ENCODE measurements at regions of chr7 and their contacts with region 1.

Region 1: DNA sequence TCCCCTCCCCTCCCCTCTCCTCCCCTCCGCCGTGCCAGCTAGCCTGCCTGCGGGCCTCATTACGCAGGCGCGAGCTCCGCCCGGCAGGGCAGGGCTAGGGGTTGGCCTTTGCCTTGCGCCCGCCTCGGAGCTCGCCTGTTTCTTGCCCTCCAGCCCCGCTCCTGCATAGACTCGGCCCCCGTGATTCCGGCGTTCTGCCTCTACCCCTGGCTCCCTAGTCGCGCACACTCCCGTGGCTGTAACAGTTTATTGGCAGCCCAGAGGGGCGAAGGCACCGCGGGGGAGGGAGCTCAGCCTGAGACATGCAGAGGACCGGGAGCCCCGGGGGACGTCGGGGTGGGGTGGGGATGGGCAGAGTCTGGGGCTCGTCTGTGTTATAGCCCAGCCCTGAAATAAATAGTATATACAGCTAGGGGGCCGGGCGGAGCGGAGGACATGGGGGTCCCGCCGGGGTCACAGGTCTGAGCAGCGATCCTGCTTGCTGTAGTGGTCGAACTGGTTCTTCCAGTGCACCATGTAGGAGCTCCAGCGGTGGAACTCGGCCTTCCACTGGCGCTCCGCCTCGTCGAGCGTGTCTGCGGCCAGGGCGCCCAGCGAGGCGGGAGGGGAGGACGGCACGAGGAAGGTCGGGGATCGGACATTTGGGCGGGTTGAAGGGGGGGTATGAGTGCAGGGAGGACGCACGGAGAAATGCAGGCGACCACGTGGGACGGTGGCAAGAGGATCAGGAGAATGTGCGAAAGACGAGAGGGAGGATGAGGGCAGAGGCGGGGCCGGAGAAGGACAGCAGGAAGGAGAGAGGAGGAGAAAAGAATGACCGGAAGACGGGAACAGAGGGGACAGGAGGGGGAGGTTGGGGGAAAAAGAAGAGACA is 483 bp upstream of the UFSP1 start:
- DNase-seq: peak; percentile 93 to 95 (median 94)
- H3K4me3 ChIP-seq: peak overlapping the region; percentile 15 to 65 (median 32)
- H3K27ac ChIP-seq: peak overlapping the region; percentile 74 to 94 (median 81)
- H3K4me1 ChIP-seq: peaks cover 17 to 42% of the 10 kb centered on the region in 2 donors
- H3K27me3 ChIP-seq: peaks cover 2% of the 10 kb centered on the region
- CTCF ChIP-seq: peak in 1 of 6 experiments; percentile 12
- POLR2A ChIP-seq: peak in 1 of 2 donors; percentile 83

Region 2: GRCh38 chr7:101035941-101036340 is 145.9 kb after region 1 on chr7:
- intact Hi-C with region 1: no loop called
- DNase-seq: no peak
- H3K4me3 ChIP-seq: no peak overlapping the region
- H3K27ac ChIP-seq: no peak overlapping the region
- H3K4me1 ChIP-seq: no peaks in the 10 kb centered on the region
- H3K27me3 ChIP-seq: peaks cover 7% of the 10 kb centered on the region
- CTCF ChIP-seq: no peak
- POLR2A ChIP-seq: no peak

Region 3: GRCh38 chr7:101058355-101058754 is 168.4 kb after region 1 on chr7:
- intact Hi-C with region 1: loop called (anchors 5 kb)
- DNase-seq: peak; percentile 45 to 74 (median 67)
- H3K4me3 ChIP-seq: no peak overlapping the region
- H3K27ac ChIP-seq: no peak overlapping the region
- H3K4me1 ChIP-seq: no peaks in the 10 kb centered on the region
- H3K27me3 ChIP-seq: peaks cover 18% of the 10 kb centered on the region
- CTCF ChIP-seq: no peak
- POLR2A ChIP-seq: no peak

Region 4: DNA sequence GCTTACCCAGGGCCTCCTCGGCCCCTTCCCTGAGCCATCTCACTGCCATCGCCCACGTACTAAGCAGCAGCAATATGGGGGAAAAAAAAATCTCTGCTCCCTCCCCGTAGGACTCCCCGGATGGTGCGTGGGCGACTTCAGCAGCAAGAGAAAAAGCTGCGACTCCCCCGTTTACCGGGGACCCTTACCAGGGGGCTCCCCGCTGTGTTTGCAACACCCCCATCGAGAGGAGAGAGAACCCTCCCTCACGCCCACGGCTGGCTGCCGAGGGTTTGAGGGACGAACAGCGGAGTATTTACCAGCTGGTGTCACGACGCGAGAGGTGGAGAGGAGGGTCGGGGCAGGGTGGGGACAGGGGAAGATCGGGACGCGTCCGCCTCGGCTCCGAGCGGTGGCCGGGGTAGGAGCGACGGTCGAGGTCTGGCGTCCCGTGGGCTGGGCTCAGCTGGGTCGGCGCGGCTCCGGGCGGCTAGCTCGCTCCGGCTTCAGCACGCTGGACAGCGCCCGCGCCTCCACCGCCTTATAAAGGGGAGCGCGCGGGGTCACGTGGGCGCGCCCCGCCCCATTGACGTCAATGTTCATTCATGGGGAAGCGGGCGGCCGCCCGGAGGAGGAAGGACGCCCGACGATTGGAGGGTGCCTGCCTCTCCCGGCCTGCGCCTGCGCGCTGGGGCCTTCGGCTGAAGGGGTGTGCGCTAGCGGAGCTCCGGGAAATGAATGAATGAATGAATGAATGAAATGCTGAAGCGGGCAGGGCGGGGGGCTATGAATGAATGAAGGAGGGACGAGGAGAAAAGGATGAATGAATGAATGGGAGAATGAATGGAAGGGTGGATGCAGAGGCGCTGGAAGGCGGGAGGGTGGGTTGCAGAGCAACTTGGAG is 275.3 kb after region 1 on chr7 and contains the start of gene VGF:
- intact Hi-C with region 1: loop called in 1 of 2 experiments (anchors 10 kb)
- DNase-seq: peak; percentile 91 to 96 (median 92)
- H3K4me3 ChIP-seq: peak within 1 kb of the TSS in 1 of 4 donors; percentile 8
- H3K27ac ChIP-seq: no peak within 1 kb of the TSS
- H3K4me1 ChIP-seq: peaks cover 12 to 34% of the 10 kb centered on the region in 2 donors
- H3K27me3 ChIP-seq: peaks cover 34% of the 10 kb centered on the region
- CTCF ChIP-seq: no peak
- POLR2A ChIP-seq: peak in 1 of 2 donors; percentile 16
- total RNA-seq, gene VGF: 0.97 to 14.3 (median 3.3) TPM in 6 of 9 donors, not detected in the others

Region 5: GRCh38 chr7:101287032-101287431 is 397.0 kb after region 1 on chr7:
- intact Hi-C with region 1: loop called in 1 of 2 experiments (anchors 10 kb)
- DNase-seq: no peak
- H3K4me3 ChIP-seq: no peak overlapping the region
- H3K27ac ChIP-seq: no peak overlapping the region
- H3K4me1 ChIP-seq: no peaks in the 10 kb centered on the region
- H3K27me3 ChIP-seq: peaks cover 7% of the 10 kb centered on the region
- CTCF ChIP-seq: no peak
- POLR2A ChIP-seq: no peak

Measured in adrenal gland (tissue), 19 donors.